ENCODE measurements at regions of chr6 and their contacts with region 1.

Region 1: GRCh38 chr6:70547313-70547712 is 19.4 kb upstream of the SDHAF4 start:
- DNase-seq: no peak
- ATAC-seq: peak; percentile 66 to 92 (median 82)
- H3K4me3 ChIP-seq: no peak overlapping the region
- H3K27ac ChIP-seq: no peak overlapping the region
- H3K4me1 ChIP-seq: peaks cover 10% of the 10 kb centered on the region
- H3K27me3 ChIP-seq: no peaks in the 10 kb centered on the region
- CTCF ChIP-seq: peak; percentile 67

Region 2: GRCh38 chr6:70667711-70668498 is 120.6 kb after region 1 on chr6 and contains the start of gene SMAP1:
- intact Hi-C with region 1: loop called in 1 of 2 experiments (anchors 5 kb)
- DNase-seq: peak; percentile 97 to 98
- ATAC-seq: peak; percentile 90 to 95 (median 92)
- H3K4me3 ChIP-seq: peak within 1 kb of the TSS; percentile 89
- H3K27ac ChIP-seq: peak within 1 kb of the TSS; percentile 95
- H3K4me1 ChIP-seq: peaks cover 56% of the 10 kb centered on the region
- H3K27me3 ChIP-seq: no peaks in the 10 kb centered on the region
- CTCF ChIP-seq: no peak
- total RNA-seq, gene SMAP1: 24.0 to 40.2 (median 29.8) TPM

Region 3: DNA sequence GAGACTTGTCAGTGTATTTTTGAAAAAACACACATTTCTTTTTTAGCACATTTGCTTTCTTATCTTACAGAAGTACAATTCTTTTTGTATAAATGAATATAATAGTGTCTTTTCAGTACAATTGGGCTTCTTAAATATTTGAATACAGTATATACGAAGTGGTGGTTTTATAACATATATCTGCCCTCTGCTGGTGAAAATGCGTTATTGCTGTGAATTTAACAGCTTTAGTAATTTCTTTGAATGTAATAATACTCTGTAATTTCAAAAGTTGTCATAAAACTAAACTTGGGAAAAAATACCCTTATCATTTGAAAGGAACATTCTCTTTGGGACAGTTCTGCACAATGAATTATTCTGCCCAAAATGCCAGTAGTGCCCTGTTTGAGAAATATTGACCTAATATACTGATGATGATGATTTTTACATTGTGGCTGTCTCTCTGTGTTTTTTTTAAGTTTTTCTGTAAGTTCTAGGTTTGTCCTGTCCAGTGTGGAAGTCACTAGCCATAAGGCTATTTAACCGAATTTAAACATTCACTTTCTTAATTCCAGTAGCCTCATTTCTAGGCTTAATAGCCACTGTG is 139.3 kb after region 1 on chr6:
- intact Hi-C with region 1: loop called (anchors 2 to 5 kb)
- DNase-seq: no peak
- ATAC-seq: peak in 3 of 4 donors; percentile 53 to 62 (median 57)
- H3K4me3 ChIP-seq: no peak overlapping the region
- H3K27ac ChIP-seq: no peak overlapping the region
- H3K4me1 ChIP-seq: peaks cover 35% of the 10 kb centered on the region
- H3K27me3 ChIP-seq: no peaks in the 10 kb centered on the region
- CTCF ChIP-seq: peak; percentile 80

Region 4: DNA sequence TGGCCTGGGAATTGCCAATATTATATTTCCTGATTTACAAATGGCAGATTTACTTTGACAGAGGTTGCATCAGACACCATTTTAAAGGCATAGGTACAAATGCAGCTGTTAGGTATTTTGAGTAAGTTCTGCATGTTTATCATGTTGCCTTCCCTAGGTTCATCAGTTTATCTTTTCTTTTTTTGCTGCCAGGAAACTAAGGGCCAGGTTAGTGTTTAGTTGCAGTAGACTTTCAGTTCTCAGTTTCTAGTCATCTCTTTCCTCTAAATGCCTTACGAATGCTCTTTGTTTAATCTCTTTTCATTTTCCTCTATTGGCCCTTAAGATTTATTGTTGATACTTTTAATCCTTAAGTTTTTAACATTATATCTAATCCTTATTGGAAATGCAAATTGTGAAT is 250.3 kb after region 1 on chr6:
- intact Hi-C with region 1: no loop called
- DNase-seq: no peak
- ATAC-seq: no peak
- H3K4me3 ChIP-seq: no peak overlapping the region
- H3K27ac ChIP-seq: no peak overlapping the region
- H3K4me1 ChIP-seq: no peaks in the 10 kb centered on the region
- H3K27me3 ChIP-seq: no peaks in the 10 kb centered on the region
- CTCF ChIP-seq: no peak

Region 5: DNA sequence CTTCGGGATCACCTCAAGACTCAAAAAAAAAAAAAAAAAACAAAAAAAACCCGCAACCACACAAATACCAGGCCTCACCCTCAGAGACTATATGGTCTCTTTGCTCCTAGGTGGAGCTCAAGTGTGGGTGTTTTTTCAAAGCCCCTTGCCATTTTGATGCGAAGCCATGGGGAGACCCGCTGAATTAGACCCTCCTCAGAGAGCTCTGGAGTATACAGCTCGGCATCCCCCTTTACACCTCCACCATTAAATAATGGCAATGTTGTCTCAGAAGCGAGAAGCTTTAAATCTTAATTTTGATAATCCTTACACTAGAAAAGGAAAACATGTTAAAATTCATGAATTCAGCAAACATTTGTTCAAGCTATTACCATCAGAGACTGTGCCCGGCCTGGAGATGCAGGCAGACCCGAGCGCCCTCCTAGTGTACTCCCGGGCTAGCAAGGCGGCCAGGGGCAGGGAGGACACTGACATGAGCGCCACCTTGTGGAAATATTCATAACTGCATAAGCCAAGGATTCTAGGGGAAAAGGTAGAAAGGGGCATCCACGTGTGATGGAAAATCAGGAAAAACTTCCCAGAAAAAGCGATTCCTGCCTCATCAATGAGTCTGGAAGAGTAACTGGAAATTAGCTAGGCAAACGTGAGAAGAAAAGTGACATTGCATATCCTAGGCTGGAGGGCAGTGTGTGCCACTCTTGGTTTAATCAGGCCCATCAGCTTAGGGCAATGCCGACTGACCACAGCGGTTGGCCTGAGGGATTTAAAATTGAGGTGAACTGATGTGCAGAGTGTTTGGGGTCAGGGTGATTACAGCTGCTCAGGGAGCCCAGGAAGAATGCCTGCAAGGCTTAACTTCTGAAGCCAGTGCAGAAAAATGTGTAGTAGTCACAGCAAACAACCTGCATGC is 337.0 kb after region 1 on chr6:
- intact Hi-C with region 1: loop called (anchors 5 to 10 kb)
- DNase-seq: peak; percentile 40 to 68
- ATAC-seq: peak; percentile 78 to 92 (median 89)
- H3K4me3 ChIP-seq: no peak overlapping the region
- H3K27ac ChIP-seq: no peak overlapping the region
- H3K4me1 ChIP-seq: peaks cover 7% of the 10 kb centered on the region
- H3K27me3 ChIP-seq: no peaks in the 10 kb centered on the region
- CTCF ChIP-seq: peak; percentile 95

Region 6: DNA sequence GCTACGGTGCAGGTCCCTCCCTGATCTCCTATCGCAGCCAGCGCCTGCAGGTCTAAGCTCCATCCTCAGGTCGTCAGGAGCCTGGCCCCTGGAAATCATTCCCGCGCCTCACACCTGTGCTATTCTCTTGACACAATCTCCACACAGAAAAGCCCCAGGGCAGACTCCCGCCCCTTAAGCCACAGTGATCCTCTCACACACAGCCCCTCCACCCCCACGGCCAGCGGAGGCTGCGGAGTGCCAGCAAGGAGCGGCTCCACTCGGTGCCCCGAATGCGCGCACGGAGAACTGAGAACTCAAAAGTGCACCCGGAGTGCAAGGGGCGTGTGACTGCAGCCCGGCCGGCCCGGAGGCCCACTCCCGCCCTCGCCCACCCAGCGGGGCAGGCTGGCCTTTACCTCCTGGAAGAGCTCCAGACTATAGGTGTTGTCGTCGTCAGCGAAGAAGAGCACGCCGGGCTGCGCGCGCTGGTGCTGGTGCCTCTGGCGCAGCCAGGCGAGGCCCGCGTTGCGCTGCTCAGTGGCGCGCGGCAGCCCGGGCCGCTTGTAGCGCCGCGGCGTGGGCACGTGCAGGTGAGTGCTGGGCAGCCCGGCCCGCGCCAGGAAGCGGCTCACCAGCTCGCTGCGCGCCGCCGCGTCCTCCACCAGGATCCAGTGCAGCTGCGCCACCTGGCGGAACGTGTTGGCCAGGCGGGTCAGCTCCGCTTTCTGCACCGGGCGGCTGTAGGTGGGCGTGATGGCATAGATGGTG is 408.3 kb after region 1 on chr6:
- intact Hi-C with region 1: loop called in 1 of 2 experiments (anchors 10 kb)
- DNase-seq: peak; percentile 84 to 90
- ATAC-seq: peak; percentile 95 to 98 (median 97)
- H3K4me3 ChIP-seq: peak overlapping the region; percentile 72
- H3K27ac ChIP-seq: no peak overlapping the region
- H3K4me1 ChIP-seq: no peaks in the 10 kb centered on the region
- H3K27me3 ChIP-seq: peaks cover 0 to 44% (median 13%) of the 10 kb centered on the region in 3 donors
- CTCF ChIP-seq: peak; percentile 88

Measured in psoas muscle (tissue), 8 donors.